ENCODE measurements at regions of chr20 and their contacts with region 1.

Region 1: DNA sequence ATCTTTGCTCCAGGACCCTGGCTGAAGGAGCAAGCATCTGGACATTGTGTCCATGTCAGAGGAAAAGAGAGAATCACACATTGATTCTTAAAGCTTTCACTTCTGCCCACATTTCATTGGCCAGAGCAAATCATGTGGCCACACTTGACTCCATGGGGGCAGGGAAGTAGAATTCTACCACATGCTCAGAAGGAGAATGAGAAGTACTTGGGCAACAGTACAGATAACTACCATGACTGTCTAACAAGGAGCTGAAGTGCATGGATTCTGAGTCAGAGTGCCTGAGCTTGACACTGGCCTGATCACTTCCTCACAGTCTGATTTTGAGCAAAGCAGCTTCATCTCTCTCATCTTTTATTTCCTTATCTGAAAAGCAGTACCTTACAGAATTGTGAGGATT is 38.6 kb downstream of the GHRH start:
- DNase-seq: peak; percentile 90 to 96 (median 96)
- H3K4me3 ChIP-seq: no peak overlapping the region
- H3K4me3 Mint-ChIP-seq: peak overlapping the region in 1 of 2 donors; percentile 68
- H3K27ac ChIP-seq: peak overlapping the region; percentile 0 to 81
- H3K27ac Mint-ChIP-seq: peak overlapping the region; percentile 89 to 98 (median 93)
- H3K4me1 ChIP-seq: peaks cover 13 to 16% of the 10 kb centered on the region in 2 donors
- H3K4me1 Mint-ChIP-seq: peaks cover 14% of the 10 kb centered on the region
- H3K27me3 ChIP-seq: no peaks in the 10 kb centered on the region
- H3K27me3 Mint-ChIP-seq: peaks cover 0 to 3% (median 0%) of the 10 kb centered on the region in 3 donors
- CTCF ChIP-seq: no peak

Region 2: DNA sequence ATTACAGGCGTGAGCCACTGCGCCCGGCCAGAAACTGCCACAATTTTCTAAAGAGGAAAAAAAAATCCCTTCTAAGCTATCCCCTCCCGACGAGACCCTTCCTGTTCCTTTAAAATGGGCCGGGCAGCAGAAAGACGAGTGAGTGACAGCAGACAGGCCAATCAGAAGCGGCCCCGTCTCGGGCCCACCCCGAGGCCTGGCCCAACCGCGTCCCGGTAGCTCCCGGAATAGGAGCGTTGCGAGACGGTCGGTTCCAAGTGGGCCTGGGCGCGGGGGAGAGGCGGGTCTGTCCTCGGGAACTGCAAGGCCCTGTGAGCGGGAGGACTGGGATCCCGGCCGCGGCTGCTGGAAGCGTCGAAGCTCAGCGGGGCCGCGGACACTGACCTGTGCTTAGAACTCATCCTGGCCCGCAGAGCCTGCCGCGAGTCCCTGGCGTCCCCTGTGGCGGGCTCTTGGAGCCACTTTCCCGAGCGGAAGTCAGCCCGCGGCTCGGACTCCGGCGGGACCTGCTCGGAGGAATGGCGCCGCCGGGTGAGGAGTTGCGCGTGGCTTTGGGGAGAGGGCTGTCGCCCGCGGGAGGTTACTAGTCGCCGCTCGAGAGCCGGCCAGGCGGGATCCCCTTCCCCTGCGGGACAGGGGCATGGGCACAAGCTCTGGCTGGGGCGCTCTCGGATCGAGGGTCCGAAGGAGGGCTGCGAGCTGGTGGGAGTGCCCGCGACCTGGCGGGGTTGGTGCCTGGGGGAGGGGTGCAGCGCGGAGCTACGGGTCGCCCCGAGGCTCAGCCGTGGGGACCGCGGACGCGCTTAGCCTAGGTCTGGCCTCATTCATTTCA is 44.0 kb before region 1 on chr20 and contains the starts of genes MROH8 and RPN2:
- intact Hi-C with region 1: loop called in 1 of 2 experiments (anchors 2 kb)
- DNase-seq: peak; percentile 94 to 96 (median 95)
- H3K4me3 ChIP-seq: peak within 1 kb of the TSS; percentile 58 to 99 (median 88)
- H3K4me3 Mint-ChIP-seq: peak within 1 kb of the TSS; percentile 96 to 97
- H3K27ac ChIP-seq: peak within 1 kb of the TSS; percentile 97
- H3K27ac Mint-ChIP-seq: peak within 1 kb of the TSS; percentile 97 to 100 (median 99)
- H3K4me1 ChIP-seq: peaks cover 17 to 30% of the 10 kb centered on the region in 2 donors
- H3K4me1 Mint-ChIP-seq: peaks cover 25% of the 10 kb centered on the region
- H3K27me3 ChIP-seq: no peaks in the 10 kb centered on the region
- H3K27me3 Mint-ChIP-seq: no peaks in the 10 kb centered on the region
- CTCF ChIP-seq: no peak
- polyA plus RNA-seq, gene MROH8: 0.08 to 1.0 (median 0.52) TPM
- polyA plus RNA-seq, gene RPN2: 169 to 215 (median 199) TPM

Region 3: GRCh38 chr20:37265152-37265551 is 42.1 kb after region 1 on chr20:
- intact Hi-C with region 1: loop called in 1 of 2 experiments (anchors 5 kb)
- DNase-seq: peak; percentile 84 to 91 (median 90)
- H3K4me3 ChIP-seq: no peak overlapping the region
- H3K4me3 Mint-ChIP-seq: no peak overlapping the region
- H3K27ac ChIP-seq: peak overlapping the region; percentile 53 to 81
- H3K27ac Mint-ChIP-seq: peak overlapping the region; percentile 37 to 89 (median 78)
- H3K4me1 ChIP-seq: peaks cover 16% of the 10 kb centered on the region in 2 donors
- H3K4me1 Mint-ChIP-seq: peaks cover 17% of the 10 kb centered on the region
- H3K27me3 ChIP-seq: no peaks in the 10 kb centered on the region
- H3K27me3 Mint-ChIP-seq: peaks cover 1 to 3% (median 2%) of the 10 kb centered on the region in 3 donors
- CTCF ChIP-seq: no peak